HCT116 (cell line): ENCODE measurements at regions of chr1 and their contacts with region 1.

Region 1: GRCh38 chr1:155167166-155168104 is 5.7 kb downstream of the KRTCAP2 start:
- DNase-seq: peak; percentile 89
- ATAC-seq: peak; percentile 88
- H3K4me3 ChIP-seq: peak overlapping the region; percentile 41 to 59
- H3K27ac ChIP-seq: peak overlapping the region; percentile 48
- H3K4me1 ChIP-seq: peaks cover 9 to 19% of the 10 kb centered on the region in 2 experiments; a peak in 2 of 4 replicates
- H3K27me3 ChIP-seq: no peaks in the 10 kb centered on the region
- CTCF ChIP-seq: peak in 2 of 3 experiments; percentile 88 to 95; a peak in 4 of 6 replicates
- POLR2A ChIP-seq: no peak
- RAD21 ChIP-seq: no peak

Region 2: DNA sequence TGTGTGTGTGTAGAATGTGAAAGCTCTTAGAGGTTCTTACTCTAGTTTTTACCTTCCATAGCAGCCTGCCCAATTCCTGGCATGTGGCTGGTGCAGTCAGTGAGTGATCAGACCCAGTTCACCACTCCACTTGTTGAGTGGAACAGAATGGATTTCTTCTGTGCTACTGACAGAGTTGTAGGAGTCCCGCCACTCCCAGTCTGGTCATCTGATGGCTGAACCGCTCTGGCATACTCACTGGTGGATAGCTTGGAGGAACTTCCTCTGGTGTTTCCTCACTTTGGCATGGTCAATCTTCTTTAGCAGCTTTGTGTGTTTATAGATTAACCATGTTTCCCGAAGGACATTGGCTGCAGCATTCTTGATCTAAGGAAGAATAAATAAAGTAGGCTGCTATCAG is 452.8 kb before region 1 on chr1:
- CTCF ChIA-PET with region 1: no interaction called
- POLR2A ChIA-PET with region 1: no interaction called
- RAD21 ChIA-PET with region 1: no interaction called
- intact Hi-C with region 1: no loop called
- DNase-seq: no peak
- ATAC-seq: peak; percentile 34; the same call in 1 of the 2 replicates
- H3K4me3 ChIP-seq: no peak overlapping the region
- H3K27ac ChIP-seq: no peak overlapping the region
- H3K4me1 ChIP-seq: no peaks in the 10 kb centered on the region
- H3K27me3 ChIP-seq: no peaks in the 10 kb centered on the region
- CTCF ChIP-seq: no peak
- POLR2A ChIP-seq: no peak
- RAD21 ChIP-seq: no peak

Region 3: GRCh38 chr1:154943649-154944400 is 223.6 kb before region 1 on chr1:
- CTCF ChIA-PET with region 1: no interaction called
- POLR2A ChIA-PET with region 1: no interaction called
- RAD21 ChIA-PET with region 1: no interaction called
- intact Hi-C with region 1: no loop called
- DNase-seq: no peak
- ATAC-seq: peak; percentile 91
- H3K4me3 ChIP-seq: no peak overlapping the region
- H3K27ac ChIP-seq: no peak overlapping the region
- H3K4me1 ChIP-seq: peaks cover 2 to 12% of the 10 kb centered on the region in 2 experiments; a peak in 3 of 4 replicates
- H3K27me3 ChIP-seq: no peaks in the 10 kb centered on the region
- CTCF ChIP-seq: peak in 2 of 3 experiments; percentile 89 to 90; a peak in 4 of 6 replicates
- POLR2A ChIP-seq: no peak
- RAD21 ChIP-seq: no peak

Region 4: DNA sequence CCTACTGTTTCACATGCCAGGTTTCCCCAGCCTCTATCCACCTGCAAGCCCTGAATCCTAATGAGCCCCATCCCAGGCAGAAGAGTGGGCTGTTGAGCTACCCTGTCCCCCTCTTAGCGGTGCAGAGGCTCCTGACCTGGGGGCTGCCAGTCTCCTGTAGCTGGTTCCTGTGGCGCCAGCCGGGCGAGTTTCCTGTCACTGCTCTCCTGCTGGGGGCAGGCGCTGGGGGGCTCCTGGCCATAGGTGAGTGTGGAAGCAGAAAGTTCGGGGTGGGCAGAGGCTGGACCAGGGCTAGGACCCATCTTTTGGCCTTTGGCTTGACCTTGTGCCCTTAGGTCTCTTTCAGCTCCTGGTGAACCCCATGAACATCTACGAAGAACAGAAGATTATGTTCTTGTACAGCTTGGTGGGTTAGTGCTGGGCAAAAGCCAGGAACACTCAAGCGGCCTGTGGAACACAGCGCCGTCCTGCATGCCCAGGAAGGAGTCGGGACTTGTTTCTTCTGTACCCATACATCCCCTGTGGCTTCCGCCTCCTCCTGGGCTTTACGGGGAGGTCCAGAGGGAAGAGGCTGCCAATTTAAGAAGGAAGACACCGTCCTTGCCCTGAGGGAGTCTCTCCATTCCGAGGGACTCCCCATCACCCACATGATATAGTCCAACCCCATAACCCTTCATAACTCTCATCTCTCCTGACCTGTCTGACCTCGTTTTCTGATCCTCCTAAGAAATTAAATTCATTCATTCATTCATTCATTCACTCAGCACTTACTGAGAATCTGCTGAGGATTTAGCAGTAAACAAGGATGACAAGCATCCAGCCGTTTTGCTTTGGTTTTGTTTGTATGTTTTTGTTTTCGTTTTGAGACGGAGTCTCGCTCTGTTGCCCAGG is 132.9 kb before region 1 on chr1:
- CTCF ChIA-PET with region 1: no interaction called
- POLR2A ChIA-PET with region 1: no interaction called
- RAD21 ChIA-PET with region 1: no interaction called
- intact Hi-C with region 1: no loop called
- DNase-seq: no peak
- ATAC-seq: no peak
- H3K4me3 ChIP-seq: no peak overlapping the region
- H3K27ac ChIP-seq: no peak overlapping the region
- H3K4me1 ChIP-seq: peaks cover 0 to 11% of the 10 kb centered on the region in 2 experiments; a peak in 2 of 4 replicates
- H3K27me3 ChIP-seq: no peaks in the 10 kb centered on the region
- CTCF ChIP-seq: no peak
- POLR2A ChIP-seq: no peak
- RAD21 ChIP-seq: no peak

Region 5: GRCh38 chr1:155044812-155045690 is 122.4 kb before region 1 on chr1:
- CTCF ChIA-PET with region 1: interaction called, 14 read pairs
- POLR2A ChIA-PET with region 1: no interaction called
- RAD21 ChIA-PET with region 1: no interaction called
- intact Hi-C with region 1: no loop called
- DNase-seq: no peak
- ATAC-seq: peak; percentile 95
- H3K4me3 ChIP-seq: no peak overlapping the region
- H3K27ac ChIP-seq: no peak overlapping the region
- H3K4me1 ChIP-seq: peaks cover 15 to 33% of the 10 kb centered on the region in 2 experiments
- H3K27me3 ChIP-seq: no peaks in the 10 kb centered on the region
- CTCF ChIP-seq: peak in 2 of 3 experiments; percentile 77 to 80; a peak in 4 of 6 replicates
- POLR2A ChIP-seq: no peak
- RAD21 ChIP-seq: no peak

Region 6: DNA sequence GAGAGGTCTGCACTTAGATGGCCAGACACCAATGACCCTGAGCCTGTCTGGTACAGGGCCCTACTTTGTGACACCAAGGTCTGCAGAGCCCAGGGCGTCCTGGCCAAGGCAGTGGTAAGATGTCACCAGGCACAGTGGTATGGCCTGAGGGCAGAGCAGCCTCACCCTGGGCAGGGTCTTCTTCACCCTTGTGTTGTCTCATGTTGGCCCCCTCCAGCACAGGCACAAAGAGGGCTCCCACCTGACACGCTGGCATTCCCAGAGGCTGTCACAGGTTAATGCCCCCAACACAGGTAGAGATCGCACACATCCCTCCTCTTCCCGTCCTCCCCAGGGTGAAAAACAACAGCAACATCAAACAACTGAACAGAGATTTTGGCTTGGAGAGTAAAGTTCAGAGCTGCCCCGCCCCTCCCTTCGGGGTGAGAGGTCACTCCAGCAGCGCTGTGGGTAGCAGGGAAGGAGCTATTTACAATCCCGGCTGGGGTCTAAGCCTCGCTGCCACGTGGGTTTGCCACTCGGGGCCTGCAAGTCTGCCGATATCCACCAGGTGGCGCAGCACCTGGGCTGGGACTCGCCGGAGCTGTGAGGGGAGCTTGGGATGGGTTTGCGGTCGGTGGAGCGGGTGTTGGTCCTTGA is 76.2 kb before region 1 on chr1:
- CTCF ChIA-PET with region 1: interaction called, 163 read pairs
- POLR2A ChIA-PET with region 1: interaction called, 9 read pairs
- RAD21 ChIA-PET with region 1: interaction called, 23 to 35 read pairs
- intact Hi-C with region 1: loop called (anchors 1 kb)
- DNase-seq: peak; percentile 61
- ATAC-seq: peak; percentile 80
- H3K4me3 ChIP-seq: peak overlapping the region; percentile 22 to 33; a peak in 3 of 4 replicates
- H3K27ac ChIP-seq: no peak overlapping the region
- H3K4me1 ChIP-seq: peaks cover 15 to 37% of the 10 kb centered on the region in 2 experiments; a peak in 3 of 4 replicates
- H3K27me3 ChIP-seq: no peaks in the 10 kb centered on the region
- CTCF ChIP-seq: peak in 2 of 3 experiments; percentile 95 to 98; a peak in 4 of 6 replicates
- POLR2A ChIP-seq: no peak
- RAD21 ChIP-seq: no peak

Region 7: DNA sequence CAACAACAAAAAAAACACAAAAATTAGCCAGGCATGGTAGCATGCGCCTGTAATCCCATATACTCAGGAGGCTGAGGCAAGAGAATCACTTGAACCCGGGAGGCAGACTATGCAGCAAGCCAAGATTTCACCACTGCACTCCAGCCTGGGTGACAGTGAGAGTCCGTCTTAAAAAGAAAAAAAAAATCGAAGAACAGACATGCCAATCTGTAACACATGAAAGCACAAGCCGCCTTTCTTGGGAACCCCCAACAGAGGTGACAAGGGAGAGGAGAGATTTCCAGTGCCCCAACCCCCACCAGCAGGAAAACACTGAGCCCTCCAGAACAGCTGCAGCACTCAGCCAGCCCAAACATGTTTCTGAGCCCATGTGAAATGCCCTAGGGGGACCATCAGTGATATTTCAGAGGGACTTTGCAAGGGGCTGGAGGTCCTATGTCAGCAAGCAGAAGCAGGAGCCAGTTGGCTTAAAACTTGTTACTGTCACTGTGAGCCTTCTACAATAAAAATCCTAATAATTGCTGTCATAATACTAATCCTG is 53.9 kb before region 1 on chr1:
- CTCF ChIA-PET with region 1: interaction called, 7 read pairs
- POLR2A ChIA-PET with region 1: no interaction called
- RAD21 ChIA-PET with region 1: no interaction called
- intact Hi-C with region 1: loop called (anchors 5 kb)
- DNase-seq: no peak
- ATAC-seq: no peak
- H3K4me3 ChIP-seq: no peak overlapping the region
- H3K27ac ChIP-seq: no peak overlapping the region
- H3K4me1 ChIP-seq: peaks cover 0 to 3% of the 10 kb centered on the region in 2 experiments; a peak in 1 of 4 replicates
- H3K27me3 ChIP-seq: no peaks in the 10 kb centered on the region
- CTCF ChIP-seq: no peak
- POLR2A ChIP-seq: no peak
- RAD21 ChIP-seq: no peak

Region 8: GRCh38 chr1:155127105-155127964 is 40.1 kb before region 1 on chr1 and contains the start of gene EFNA1:
- CTCF ChIA-PET with region 1: interaction called, 13 read pairs
- POLR2A ChIA-PET with region 1: no interaction called
- RAD21 ChIA-PET with region 1: interaction called in 1 of 2 experiments, 4 read pairs
- intact Hi-C with region 1: no loop called
- DNase-seq: no peak
- ATAC-seq: peak; percentile 58
- H3K4me3 ChIP-seq: peak within 1 kb of the TSS; percentile 70 to 97
- H3K27ac ChIP-seq: peak within 1 kb of the TSS; percentile 97
- H3K4me1 ChIP-seq: peaks cover 29 to 73% of the 10 kb centered on the region in 2 experiments
- H3K27me3 ChIP-seq: no peaks in the 10 kb centered on the region
- CTCF ChIP-seq: no peak
- POLR2A ChIP-seq: no peak
- RAD21 ChIP-seq: no peak
- total RNA-seq, gene EFNA1: 19.7 TPM

Region 9: GRCh38 chr1:155135415-155136028 is 31.9 kb before region 1 on chr1 and contains the start of gene SLC50A1:
- CTCF ChIA-PET with region 1: interaction called, 13 read pairs
- POLR2A ChIA-PET with region 1: interaction called, 3 read pairs
- RAD21 ChIA-PET with region 1: interaction called, 5 to 7 read pairs
- intact Hi-C with region 1: loop called (anchors 2 kb)
- DNase-seq: peak; percentile 82
- ATAC-seq: peak; percentile 80
- H3K4me3 ChIP-seq: peak within 1 kb of the TSS; percentile 77 to 88
- H3K27ac ChIP-seq: peak within 1 kb of the TSS; percentile 95
- H3K4me1 ChIP-seq: peaks cover 36 to 66% of the 10 kb centered on the region in 2 experiments
- H3K27me3 ChIP-seq: no peaks in the 10 kb centered on the region
- CTCF ChIP-seq: 0 out of 6 replicates have a peak, but pooled peaks of 1 of the 3 experiments have one; percentile 13
- POLR2A ChIP-seq: peak; percentile 77
- RAD21 ChIP-seq: no peak
- total RNA-seq, gene SLC50A1: 49.9 TPM

Region 10: DNA sequence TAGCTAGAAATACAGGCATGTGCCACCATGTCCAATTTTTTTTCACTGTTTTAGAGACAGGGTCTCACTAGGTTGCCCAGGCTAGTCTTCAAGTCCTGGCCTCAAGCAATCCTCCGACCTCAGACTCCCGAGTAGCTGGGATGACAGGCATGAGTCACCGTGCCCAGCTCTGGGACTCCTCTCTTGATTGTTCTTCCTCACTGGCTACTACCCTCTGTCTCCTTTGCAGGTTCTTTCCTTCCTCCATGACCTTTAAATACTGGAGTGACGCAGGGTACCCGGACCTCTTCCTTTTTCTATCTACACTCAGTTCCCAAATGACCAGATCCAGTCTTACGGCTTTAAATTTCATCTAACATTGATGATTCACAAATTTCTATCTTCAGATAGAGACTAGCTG is 360.2 kb after region 1 on chr1:
- CTCF ChIA-PET with region 1: no interaction called
- POLR2A ChIA-PET with region 1: no interaction called
- RAD21 ChIA-PET with region 1: no interaction called
- intact Hi-C with region 1: no loop called
- DNase-seq: no peak
- ATAC-seq: no peak
- H3K4me3 ChIP-seq: no peak overlapping the region
- H3K27ac ChIP-seq: no peak overlapping the region
- H3K4me1 ChIP-seq: peaks cover 0 to 10% of the 10 kb centered on the region in 2 experiments; a peak in 1 of 4 replicates
- H3K27me3 ChIP-seq: no peaks in the 10 kb centered on the region
- CTCF ChIP-seq: no peak
- POLR2A ChIP-seq: no peak
- RAD21 ChIP-seq: no peak